ENCODE measurements at regions of chr5 and their contacts with region 1.

Region 1: GRCh38 chr5:163505368-163506094 is at the start of gene MAT2B:
- DNase-seq: peak; percentile 87 to 96
- H3K4me3 ChIP-seq: peak within 1 kb of the TSS; percentile 92
- H3K27ac ChIP-seq: peak within 1 kb of the TSS; percentile 72
- H3K4me1 ChIP-seq: peaks cover 29% of the 10 kb centered on the region
- H3K27me3 ChIP-seq: no peaks in the 10 kb centered on the region
- CTCF ChIP-seq: peak; percentile 56; the same call in 1 of the 2 replicates
- total RNA-seq, gene MAT2B: 46.3 and 66.2 TPM in 2 replicates

Region 2: GRCh38 chr5:163437309-163438182 is 68.0 kb before region 1 on chr5 and contains the start of gene CCNG1:
- CTCF ChIA-PET with region 1: no interaction called
- POLR2A ChIA-PET with region 1: interaction called, 3 read pairs
- intact Hi-C with region 1: loop called (anchors 2 kb)
- DNase-seq: peak; percentile 91 to 95
- H3K4me3 ChIP-seq: peak within 1 kb of the TSS; percentile 85
- H3K27ac ChIP-seq: peak within 1 kb of the TSS; percentile 56
- H3K4me1 ChIP-seq: peaks cover 28% of the 10 kb centered on the region
- H3K27me3 ChIP-seq: no peaks in the 10 kb centered on the region
- CTCF ChIP-seq: no peak
- total RNA-seq, gene CCNG1: 112 and 170 TPM in 2 replicates

Region 3: DNA sequence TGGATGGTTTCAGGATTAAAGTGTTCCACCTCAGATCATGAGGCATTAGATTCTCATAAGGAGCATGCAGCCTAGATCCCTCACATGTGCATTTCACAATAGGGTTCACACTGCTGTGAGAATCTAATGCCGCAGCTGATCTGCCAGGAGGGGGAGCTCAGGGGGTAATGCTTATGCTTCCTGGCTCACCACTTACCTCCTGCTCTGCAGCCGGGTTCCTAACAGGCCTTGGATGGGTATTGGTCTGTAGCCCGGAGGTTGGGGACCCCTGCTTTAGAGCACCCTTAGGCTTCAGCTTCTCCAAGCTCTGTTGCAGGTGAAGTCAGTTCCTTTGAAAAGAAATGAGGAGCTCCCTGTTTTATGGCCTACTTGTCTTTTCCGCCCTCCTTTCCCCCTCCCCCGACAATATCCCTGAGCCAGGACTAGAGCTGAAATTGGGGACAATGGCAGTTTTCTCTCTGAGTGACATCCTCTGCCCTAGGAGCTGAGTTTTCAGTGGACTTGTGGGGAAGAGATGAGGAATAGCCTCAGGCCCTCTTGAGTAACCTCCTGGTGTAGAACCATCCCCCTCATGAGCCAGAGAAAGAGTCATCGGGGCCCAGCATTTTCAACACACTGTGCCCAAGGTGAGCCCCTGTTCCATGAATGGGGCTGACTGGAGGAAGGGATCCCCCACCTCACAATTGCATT is 16.3 kb before region 1 on chr5:
- CTCF ChIA-PET with region 1: interaction called, 3 read pairs
- POLR2A ChIA-PET with region 1: interaction called, 10 read pairs
- intact Hi-C with region 1: no loop called
- DNase-seq: no peak
- H3K4me3 ChIP-seq: no peak overlapping the region
- H3K27ac ChIP-seq: no peak overlapping the region
- H3K4me1 ChIP-seq: no peaks in the 10 kb centered on the region
- H3K27me3 ChIP-seq: no peaks in the 10 kb centered on the region
- CTCF ChIP-seq: no peak

Region 4: GRCh38 chr5:163552536-163552935 is 47.0 kb after region 1 on chr5:
- CTCF ChIA-PET with region 1: no interaction called
- POLR2A ChIA-PET with region 1: no interaction called
- intact Hi-C with region 1: no loop called
- DNase-seq: no peak
- H3K4me3 ChIP-seq: no peak overlapping the region
- H3K27ac ChIP-seq: no peak overlapping the region
- H3K4me1 ChIP-seq: no peaks in the 10 kb centered on the region
- H3K27me3 ChIP-seq: peaks cover 58% of the 10 kb centered on the region
- CTCF ChIP-seq: no peak

Measured in PC-9 (cell line).